ENCODE measurements at regions of chr18 and their contacts with region 1.

Region 1: DNA sequence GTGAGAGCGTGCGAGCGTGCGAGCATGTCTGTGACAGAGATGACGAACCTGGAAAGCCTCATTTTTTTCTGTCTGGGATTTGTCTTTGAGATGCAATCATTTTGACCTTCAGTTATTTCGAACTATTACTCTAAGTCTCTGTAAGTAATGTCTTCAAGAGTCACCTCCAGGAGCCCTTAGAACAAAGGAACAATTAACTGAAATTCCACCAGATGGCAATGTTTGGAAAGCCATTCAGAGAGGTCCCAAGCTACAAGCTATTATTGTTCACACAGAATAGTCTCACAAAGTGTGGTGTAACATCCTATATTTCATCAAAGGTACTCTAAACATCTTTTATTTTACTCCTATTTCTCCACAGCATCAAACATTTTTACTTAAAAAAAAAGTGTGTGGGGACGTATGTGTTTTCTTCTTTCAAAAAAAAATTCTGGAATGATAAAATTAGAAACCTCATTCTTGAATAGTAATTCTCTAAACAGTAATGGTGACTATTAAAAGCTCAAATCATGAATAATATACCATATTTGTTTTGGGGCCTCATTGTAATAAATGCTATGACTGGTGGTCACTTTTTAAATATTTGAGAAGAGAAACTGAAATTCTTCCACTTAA is 35.1 kb upstream of the MAPRE2 start:
- DNase-seq: no peak
- ATAC-seq: peak; percentile 67 to 88 (median 86)
- H3K4me3 ChIP-seq: no peak overlapping the region
- H3K27ac ChIP-seq: no peak overlapping the region
- H3K4me1 ChIP-seq: peaks cover 0 to 7% (median 0%) of the 10 kb centered on the region in 12 donors
- H3K27me3 ChIP-seq: no peaks in the 10 kb centered on the region
- CTCF ChIP-seq: peak; percentile 52 to 81 (median 72)
- POLR2A ChIP-seq: no peak

Region 2: DNA sequence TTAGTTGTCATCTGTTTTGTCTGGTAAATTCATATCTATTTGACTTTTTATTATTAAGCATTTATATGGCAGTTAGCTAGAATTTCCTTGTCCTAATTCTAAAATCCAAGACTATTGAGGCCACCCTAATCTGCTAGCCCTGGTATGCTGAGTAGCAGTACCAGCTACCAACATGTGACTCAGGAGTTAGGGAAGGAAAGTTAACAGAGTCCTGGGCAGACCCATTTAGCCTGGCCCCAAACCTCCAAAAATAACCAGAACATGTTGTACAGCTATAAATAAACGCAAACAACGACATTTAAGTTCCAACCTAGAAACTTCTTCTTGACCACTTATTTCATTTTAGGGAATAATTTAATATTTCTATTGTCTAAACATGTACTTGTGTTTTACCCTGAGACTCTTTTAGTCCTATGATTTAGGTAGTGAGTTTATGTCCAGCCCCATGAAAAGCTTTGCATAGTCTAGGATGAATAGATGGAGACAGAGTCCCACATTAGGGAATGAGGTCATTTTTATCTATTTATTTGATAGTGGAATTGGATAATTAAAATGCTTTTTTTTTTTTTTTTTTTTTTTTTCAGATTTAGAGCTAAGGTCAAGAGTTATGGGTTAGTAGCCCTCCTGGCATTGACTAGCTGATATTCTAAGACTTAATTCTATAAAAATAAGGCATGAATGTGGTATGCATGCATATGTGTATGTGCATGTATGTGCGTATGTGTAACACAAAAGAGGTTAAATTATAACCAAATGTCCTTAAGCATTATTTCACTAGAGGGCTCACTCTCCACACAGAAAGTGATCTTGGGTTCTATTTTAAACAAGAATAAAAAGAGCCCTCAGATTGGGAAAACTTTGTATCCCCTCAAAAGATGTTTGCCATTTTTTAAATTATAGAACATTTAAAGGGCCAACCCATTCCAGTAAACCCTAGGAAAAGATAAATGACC is 124.9 kb before region 1 on chr18:
- intact Hi-C with region 1: loop called in 1 of 10 experiments (anchors 10 kb)
- DNase-seq: no peak
- ATAC-seq: peak; percentile 87 to 95 (median 90)
- H3K4me3 ChIP-seq: no peak overlapping the region
- H3K27ac ChIP-seq: peak overlapping the region; percentile 33 to 88 (median 70)
- H3K4me1 ChIP-seq: peaks cover 0 to 26% (median 10%) of the 10 kb centered on the region in 12 donors
- H3K27me3 ChIP-seq: no peaks in the 10 kb centered on the region
- CTCF ChIP-seq: peak in 9 of 12 donors; percentile 12 to 47 (median 27)
- POLR2A ChIP-seq: no peak

Region 3: DNA sequence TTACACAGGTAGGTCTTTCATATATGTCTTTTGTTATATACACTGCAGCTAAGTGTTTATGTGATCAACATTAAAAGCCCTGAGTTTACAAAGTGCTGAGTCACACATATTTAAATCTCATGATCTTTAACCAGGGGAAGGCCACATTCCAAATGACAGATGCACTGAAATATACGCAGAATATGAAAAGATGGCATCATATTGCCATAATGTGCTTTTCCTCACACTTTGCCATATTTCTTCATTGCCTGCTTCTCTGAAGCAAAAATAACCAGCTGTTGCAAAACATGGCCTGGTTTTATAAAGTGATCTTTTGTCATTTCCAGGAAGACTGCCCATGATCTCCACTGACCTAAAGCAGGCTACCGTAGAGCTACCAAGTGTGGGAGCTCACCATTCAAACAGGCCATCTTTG is 58.4 kb before region 1 on chr18:
- intact Hi-C with region 1: no loop called
- DNase-seq: no peak
- ATAC-seq: peak in 1 of 4 donors; percentile 58
- H3K4me3 ChIP-seq: no peak overlapping the region
- H3K27ac ChIP-seq: no peak overlapping the region
- H3K4me1 ChIP-seq: peaks cover 0 to 8% (median 0%) of the 10 kb centered on the region in 12 donors
- H3K27me3 ChIP-seq: no peaks in the 10 kb centered on the region
- CTCF ChIP-seq: no peak
- POLR2A ChIP-seq: no peak

Region 4: GRCh38 chr18:35231052-35231451 is 225.0 kb after region 1 on chr18:
- intact Hi-C with region 1: loop called in 6 of 10 experiments (anchors 5 to 10 kb)
- DNase-seq: peak; percentile 72 to 86 (median 81)
- ATAC-seq: peak; percentile 84 to 94 (median 92)
- H3K4me3 ChIP-seq: peak overlapping the region in 8 of 12 donors; percentile 1 to 34 (median 20)
- H3K27ac ChIP-seq: no peak overlapping the region
- H3K4me1 ChIP-seq: peaks cover 0 to 5% (median 0%) of the 10 kb centered on the region in 12 donors
- H3K27me3 ChIP-seq: peaks cover 0 to 3% (median 0%) of the 10 kb centered on the region in 9 donors
- CTCF ChIP-seq: peak; percentile 91 to 97 (median 96)
- POLR2A ChIP-seq: no peak

Region 5: DNA sequence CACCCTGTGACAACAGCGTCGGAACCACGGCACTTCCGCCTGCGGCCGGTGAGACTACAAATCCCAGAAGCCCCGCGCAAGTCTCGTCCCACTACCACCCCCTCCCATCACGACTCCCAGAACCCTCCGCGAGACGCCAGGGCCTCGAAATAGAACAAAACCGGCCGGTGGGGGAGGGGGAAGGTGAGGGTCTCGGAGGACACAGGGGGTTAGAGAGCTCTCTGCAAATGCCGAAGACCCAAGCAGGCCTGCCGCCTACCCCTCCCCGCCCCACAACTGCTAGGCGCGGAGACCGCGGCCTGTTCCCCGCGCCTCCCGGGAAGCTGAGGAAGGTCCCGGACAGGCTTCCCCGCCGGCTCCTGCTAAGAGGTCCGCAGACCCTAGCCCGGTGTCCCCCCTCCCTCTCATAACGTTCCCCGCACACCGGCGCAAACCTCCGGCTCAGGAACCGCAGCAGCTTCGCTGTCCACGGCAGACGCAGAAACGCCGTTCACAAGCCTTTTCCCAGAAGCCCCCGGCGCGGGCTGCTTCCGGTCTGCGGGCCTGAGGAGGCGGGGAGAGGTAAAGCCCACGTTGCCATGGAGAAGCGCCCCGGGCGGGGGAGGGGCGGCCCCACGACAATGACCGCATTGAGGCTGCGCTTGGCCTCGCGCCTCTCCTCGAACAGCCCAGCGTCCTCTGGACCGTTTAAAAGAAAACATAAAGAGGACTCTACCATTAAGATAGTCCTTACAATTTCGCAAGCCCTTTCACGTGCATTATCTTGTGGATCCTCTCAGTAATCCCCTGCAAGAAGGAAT is 338.1 kb after region 1 on chr18 and contains the start of gene ZNF24:
- intact Hi-C with region 1: loop called in 1 of 10 experiments (anchors 10 kb)
- DNase-seq: peak; percentile 96 to 98 (median 97)
- ATAC-seq: peak; percentile 97 to 99 (median 98)
- H3K4me3 ChIP-seq: peak within 1 kb of the TSS; percentile 80 to 100 (median 98)
- H3K27ac ChIP-seq: peak within 1 kb of the TSS; percentile 97 to 100 (median 100)
- H3K4me1 ChIP-seq: peaks cover 5 to 56% (median 39%) of the 10 kb centered on the region in 12 donors
- H3K27me3 ChIP-seq: no peaks in the 10 kb centered on the region
- CTCF ChIP-seq: no peak
- POLR2A ChIP-seq: peak in 1 of 2 donors; percentile 57
- total RNA-seq, gene ZNF24: 32.3 to 53.3 (median 46.1) TPM

Region 6: DNA sequence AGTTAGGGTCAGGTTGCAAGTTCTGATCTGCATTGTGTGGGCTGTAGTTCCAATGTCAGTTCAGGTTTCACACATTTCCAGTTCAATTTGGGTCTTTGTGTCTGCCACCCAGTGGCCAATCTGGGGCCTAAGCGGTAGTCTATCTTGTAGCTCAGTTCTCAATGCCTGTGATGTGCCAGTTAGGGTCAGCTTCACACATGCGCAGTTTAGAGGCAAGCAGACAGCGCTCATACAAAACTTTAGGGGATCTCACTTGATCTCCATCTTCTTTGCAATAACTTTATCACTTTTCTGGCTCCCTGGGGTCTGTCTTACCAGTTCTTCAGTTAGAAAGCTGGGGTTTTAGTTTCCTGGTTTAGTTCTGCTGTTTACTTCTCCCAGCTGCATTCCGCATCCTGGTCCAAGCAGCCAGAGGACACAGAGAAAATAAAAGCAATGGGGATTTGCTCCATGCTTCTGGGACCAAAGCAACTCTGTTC is 349.1 kb after region 1 on chr18:
- intact Hi-C with region 1: loop called in 8 of 10 experiments (anchors 5 to 10 kb)
- DNase-seq: peak; percentile 69 to 78 (median 73)
- ATAC-seq: peak; percentile 69 to 99 (median 98)
- H3K4me3 ChIP-seq: peak overlapping the region in 5 of 12 donors; percentile 20 to 42 (median 30)
- H3K27ac ChIP-seq: peak overlapping the region in 1 of 12 donors; percentile 10
- H3K4me1 ChIP-seq: peaks cover 0 to 7% (median 0%) of the 10 kb centered on the region in 12 donors
- H3K27me3 ChIP-seq: no peaks in the 10 kb centered on the region
- CTCF ChIP-seq: peak; percentile 49 to 84 (median 69)
- POLR2A ChIP-seq: no peak